AG04450 (cell line): ENCODE measurements at regions of chr22 and their contacts with region 1.

Region 1: GRCh38 chr22:41697126-41697775 is 2.1 kb upstream of the MEI1 start:
- DNase-seq: peak; percentile 72
- H3K4me3 ChIP-seq: 0 out of 2 replicates have a peak overlapping the region, but pooled peaks have one; percentile 10
- H3K27ac ChIP-seq: no peak overlapping the region
- H3K27me3 ChIP-seq: no peaks in the 10 kb centered on the region
- CTCF ChIP-seq: peak; percentile 98

Region 2: DNA sequence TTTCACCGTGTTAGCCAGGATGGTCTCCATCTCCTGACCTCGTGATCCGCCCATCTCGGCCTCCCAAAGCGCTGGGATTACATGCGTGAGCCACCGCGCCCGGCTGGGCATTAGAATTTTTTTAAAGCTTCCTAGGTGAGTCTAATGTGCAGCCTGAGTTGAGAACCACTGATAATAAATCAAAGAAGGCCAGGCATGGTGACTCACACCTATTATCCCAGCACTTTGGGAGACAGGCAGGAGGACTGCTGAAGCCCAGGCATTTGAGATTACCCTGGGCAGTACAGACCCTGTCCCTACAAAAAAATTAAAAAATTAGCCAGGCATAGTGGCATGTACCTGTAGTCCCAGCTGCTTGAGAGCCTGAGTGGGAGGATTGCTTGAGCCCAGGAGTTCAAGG is 15.8 kb after region 1 on chr22:
- CTCF ChIA-PET with region 1: interaction called, 28 read pairs
- POLR2A ChIA-PET with region 1: no interaction called
- DNase-seq: no peak
- H3K4me3 ChIP-seq: no peak overlapping the region
- H3K27ac ChIP-seq: no peak overlapping the region
- H3K27me3 ChIP-seq: peaks cover 22% of the 10 kb centered on the region
- CTCF ChIP-seq: no peak

Region 3: DNA sequence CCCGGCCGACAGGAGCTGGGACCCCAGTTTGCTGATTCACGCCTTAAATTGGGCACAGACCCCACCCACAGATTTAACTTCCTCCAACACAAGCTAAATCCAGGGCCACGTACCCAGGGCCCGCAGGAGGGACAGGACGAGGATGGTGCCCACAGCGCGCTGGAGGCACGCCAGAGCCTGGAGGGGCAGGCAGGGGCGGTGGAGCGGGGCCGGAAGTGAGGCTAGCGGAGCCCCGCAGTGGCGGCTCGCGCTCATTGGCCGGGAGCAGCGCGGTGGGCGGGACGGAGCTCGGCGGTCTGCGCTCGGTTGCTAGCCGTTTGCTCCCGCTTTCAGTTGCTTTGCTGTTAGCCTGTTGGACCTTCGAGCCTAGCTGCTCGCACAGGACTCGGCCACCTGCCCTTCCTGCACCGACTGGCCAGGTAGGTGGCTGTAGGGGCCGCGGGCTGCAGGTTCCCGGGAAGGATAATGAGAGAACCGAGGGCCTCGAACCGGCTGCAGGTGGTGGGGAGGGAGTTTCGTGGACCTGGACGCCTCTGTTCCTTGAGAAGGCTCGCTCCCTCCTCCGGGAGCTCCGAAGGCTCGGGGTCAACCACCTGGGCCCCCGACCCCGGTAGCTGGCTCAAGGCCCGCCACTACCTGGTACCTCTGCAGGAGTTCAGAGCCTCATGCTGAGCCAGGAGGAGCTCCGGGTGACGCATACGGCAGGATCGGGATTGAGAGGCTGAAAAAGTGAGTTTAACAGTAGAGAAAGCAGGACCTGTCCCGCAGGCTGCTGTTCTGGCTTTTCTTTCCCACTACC is 103.3 kb after region 1 on chr22 and contains the start of gene CCDC134:
- CTCF ChIA-PET with region 1: interaction called, 18 read pairs
- POLR2A ChIA-PET with region 1: interaction called, 8 read pairs
- DNase-seq: peak; percentile 30
- H3K4me3 ChIP-seq: peak within 1 kb of the TSS; percentile 98
- H3K27ac ChIP-seq: peak within 1 kb of the TSS; percentile 52
- H3K27me3 ChIP-seq: no peaks in the 10 kb centered on the region
- CTCF ChIP-seq: no peak
- polyA plus RNA-seq, gene CCDC134: 2.6 and 3.5 TPM in 2 replicates

Region 4: GRCh38 chr22:41925655-41926460 is 228.6 kb after region 1 on chr22:
- CTCF ChIA-PET with region 1: interaction called, 11 read pairs
- POLR2A ChIA-PET with region 1: no interaction called
- DNase-seq: no peak
- H3K4me3 ChIP-seq: peak overlapping the region; percentile 38
- H3K27ac ChIP-seq: no peak overlapping the region
- H3K27me3 ChIP-seq: peaks cover 12% of the 10 kb centered on the region
- CTCF ChIP-seq: peak; percentile 57

Region 5: DNA sequence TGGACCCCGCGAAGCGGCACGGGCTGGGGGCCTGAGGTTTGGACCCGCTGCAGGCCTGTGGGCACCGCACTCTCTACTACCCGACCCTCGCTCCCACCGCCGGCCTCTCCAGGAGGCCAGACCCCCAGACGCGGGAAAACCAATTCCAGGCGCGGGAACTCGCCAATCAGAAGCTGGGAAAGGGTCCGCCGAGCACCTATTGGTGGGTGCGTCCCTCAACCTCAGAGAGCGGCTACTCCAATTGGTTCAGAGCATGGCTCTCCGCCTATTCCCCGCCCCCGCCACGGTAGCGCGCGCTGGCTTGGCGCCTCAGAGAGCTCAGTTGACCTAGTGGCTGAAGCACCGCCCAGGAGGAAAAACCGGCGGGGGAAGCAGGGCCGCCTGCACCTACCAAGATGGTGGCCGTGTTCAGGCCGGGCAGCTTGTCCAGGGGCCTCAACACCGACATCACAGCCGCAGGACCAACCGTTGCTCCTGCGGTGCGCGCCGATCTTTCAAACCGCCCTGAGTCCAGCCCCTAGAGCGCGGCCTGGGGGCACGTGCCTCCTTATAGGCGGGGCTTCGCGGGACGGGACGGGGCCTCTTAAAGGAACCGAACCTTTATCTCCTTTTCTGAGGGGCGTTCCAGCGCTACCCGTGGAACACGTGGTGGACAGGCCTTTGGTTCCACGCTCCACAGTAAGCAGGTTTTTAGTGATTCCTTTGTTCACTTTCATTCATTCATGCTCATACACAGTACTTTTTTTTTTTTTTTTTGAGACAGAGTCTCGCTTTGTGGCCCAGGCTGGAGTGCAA is 249.6 kb after region 1 on chr22 and contains the start of gene CENPM:
- CTCF ChIA-PET with region 1: interaction called, 281 read pairs
- POLR2A ChIA-PET with region 1: interaction called, 6 read pairs
- DNase-seq: peak; percentile 79
- H3K4me3 ChIP-seq: peak within 1 kb of the TSS; percentile 93
- H3K27ac ChIP-seq: no peak within 1 kb of the TSS
- H3K27me3 ChIP-seq: no peaks in the 10 kb centered on the region
- CTCF ChIP-seq: no peak
- polyA plus RNA-seq, gene CENPM: 5.1 and 6.8 TPM in 2 replicates

Region 6: DNA sequence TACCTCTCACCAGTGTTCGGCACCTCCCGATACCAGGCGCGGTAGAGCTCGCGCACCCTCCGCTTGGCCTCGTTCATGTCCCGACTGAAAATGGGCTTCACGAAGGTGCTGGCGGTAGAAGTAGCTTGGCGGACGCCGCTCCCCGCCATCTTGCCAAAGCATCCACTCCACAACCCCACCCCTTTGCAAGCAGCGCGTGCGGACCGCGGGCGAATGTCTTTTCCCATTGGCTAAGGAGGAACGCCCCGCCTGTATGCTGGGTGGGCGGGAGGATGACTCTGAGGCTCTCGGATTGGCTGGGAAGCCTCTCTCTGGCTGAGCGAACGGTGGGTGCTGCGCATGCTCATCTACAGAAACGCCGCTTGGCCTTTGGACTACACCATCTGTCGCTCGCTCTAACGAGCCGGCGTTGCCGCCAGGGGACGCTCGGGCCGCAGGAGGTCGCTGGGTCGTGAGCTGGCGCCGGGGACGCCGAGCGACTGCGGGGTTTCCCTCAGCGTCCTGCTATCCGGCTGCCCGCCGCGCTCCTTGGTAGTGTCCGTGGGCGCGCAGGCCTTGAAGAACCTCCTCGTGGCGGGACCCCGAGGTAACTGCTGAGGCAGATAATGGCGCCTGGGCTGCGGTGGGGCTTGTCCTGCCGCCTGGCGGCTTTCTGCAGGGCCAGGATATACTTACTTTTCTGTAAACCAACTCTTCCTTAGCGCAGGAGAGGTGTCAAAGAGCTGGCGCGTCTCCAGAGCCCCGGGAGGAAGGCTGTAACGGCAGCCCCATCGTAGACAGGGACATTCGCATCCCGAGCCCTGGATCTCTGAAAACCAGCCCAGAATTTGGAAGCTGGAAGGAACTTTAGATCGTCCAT is 393.6 kb after region 1 on chr22 and contains the start of gene NDUFA6:
- CTCF ChIA-PET with region 1: interaction called, 10 read pairs
- POLR2A ChIA-PET with region 1: no interaction called
- DNase-seq: peak; percentile 97
- H3K4me3 ChIP-seq: peak within 1 kb of the TSS; percentile 93
- H3K27ac ChIP-seq: peak within 1 kb of the TSS; percentile 90
- H3K27me3 ChIP-seq: no peaks in the 10 kb centered on the region
- CTCF ChIP-seq: peak; percentile 86
- polyA plus RNA-seq, gene NDUFA6: 90.4 and 103 TPM in 2 replicates